H1 (cell line): ENCODE measurements at regions of chr4 and their contacts with region 1.

Region 1: GRCh38 chr4:135418353-135418752 is 1216.8 kb upstream of the PABPC4L start:
- DNase-seq: no peak
- H3K4me3 ChIP-seq: no peak overlapping the region
- H3K27ac ChIP-seq: no peak overlapping the region
- H3K4me1 ChIP-seq: no peaks in the 10 kb centered on the region
- H3K27me3 ChIP-seq: no peaks in the 10 kb centered on the region
- CTCF ChIP-seq: peak in 2 of 3 experiments; percentile 44 to 70; a peak in 2 of 4 replicates
- EP300 ChIP-seq: no peak
- POLR2A ChIP-seq: no peak
- RAD21 ChIP-seq: peak; percentile 67 to 72

Region 2: DNA sequence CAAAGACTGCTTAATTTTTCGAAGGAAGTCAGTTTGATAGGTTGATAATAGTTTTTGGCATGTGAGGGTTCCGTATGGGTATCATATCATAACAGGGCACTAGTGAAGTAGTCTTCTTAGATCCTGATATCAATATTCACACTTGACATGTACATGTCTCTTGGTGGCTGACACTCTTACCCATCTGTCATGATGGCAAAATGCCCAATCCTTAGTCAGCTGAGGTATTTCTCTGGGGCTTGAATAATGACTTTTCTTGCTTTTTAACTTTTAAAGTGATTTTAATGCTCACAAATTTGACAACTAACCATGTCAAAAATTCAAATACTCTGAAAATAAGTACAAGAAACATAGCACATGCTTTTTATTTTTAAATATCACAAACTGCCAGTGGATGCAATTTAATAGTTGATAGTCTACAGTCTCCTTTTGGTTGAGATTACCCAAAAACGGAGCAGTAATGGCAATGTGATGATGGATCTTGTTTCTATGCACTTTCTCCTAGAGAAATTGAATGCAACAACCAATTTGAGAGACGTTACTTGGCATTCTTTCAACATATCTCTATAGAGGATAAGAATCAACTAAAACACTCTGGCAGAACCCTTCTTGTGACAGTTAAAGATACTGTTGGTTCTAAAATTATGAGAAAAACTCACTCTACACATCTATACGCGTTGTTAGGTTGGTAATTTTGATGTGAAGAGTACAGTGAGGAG is 663.9 kb before region 1 on chr4:
- CTCF ChIA-PET with region 1: no interaction called
- POLR2A ChIA-PET with region 1: no interaction called
- DNase-seq: no peak
- H3K4me3 ChIP-seq: no peak overlapping the region
- H3K27ac ChIP-seq: no peak overlapping the region
- H3K4me1 ChIP-seq: no peaks in the 10 kb centered on the region
- H3K27me3 ChIP-seq: no peaks in the 10 kb centered on the region
- CTCF ChIP-seq: no peak
- EP300 ChIP-seq: no peak
- POLR2A ChIP-seq: no peak
- RAD21 ChIP-seq: no peak

Region 3: DNA sequence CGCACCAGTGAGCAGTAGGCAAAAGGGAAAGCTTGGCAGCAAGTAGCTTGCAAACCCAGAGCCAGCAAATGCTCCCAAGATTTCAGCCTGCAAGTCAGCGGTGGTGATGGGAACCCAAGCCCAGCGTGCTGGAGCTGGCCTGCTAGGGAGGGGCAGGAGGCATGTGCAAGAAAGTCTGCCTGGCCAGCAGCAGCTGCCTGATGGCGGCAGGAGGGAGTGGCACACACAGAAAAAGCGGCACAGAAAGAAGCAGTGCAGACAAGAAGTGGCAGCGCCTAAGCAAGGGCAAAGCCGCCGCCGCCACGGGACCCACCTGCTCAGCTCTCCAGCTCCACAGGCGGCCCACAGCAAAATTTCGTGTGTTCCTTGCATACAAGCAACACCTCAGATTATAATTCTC is 10.2 kb before region 1 on chr4:
- CTCF ChIA-PET with region 1: interaction called, 14 read pairs
- POLR2A ChIA-PET with region 1: no interaction called
- DNase-seq: no peak
- H3K4me3 ChIP-seq: no peak overlapping the region
- H3K27ac ChIP-seq: no peak overlapping the region
- H3K4me1 ChIP-seq: no peaks in the 10 kb centered on the region
- H3K27me3 ChIP-seq: peaks cover 0 to 1% (median 0%) of the 10 kb centered on the region in 4 experiments; a peak in 1 of 7 replicates
- CTCF ChIP-seq: no peak
- EP300 ChIP-seq: no peak
- POLR2A ChIP-seq: no peak
- RAD21 ChIP-seq: no peak

Region 4: GRCh38 chr4:135492439-135492838 is 74.1 kb after region 1 on chr4:
- CTCF ChIA-PET with region 1: no interaction called
- POLR2A ChIA-PET with region 1: no interaction called
- DNase-seq: no peak
- H3K4me3 ChIP-seq: no peak overlapping the region
- H3K27ac ChIP-seq: no peak overlapping the region
- H3K4me1 ChIP-seq: no peaks in the 10 kb centered on the region
- H3K27me3 ChIP-seq: no peaks in the 10 kb centered on the region
- CTCF ChIP-seq: no peak
- EP300 ChIP-seq: no peak
- POLR2A ChIP-seq: no peak
- RAD21 ChIP-seq: peak in 1 of 2 experiments; percentile 17; a peak in 1 of 4 replicates

Region 5: DNA sequence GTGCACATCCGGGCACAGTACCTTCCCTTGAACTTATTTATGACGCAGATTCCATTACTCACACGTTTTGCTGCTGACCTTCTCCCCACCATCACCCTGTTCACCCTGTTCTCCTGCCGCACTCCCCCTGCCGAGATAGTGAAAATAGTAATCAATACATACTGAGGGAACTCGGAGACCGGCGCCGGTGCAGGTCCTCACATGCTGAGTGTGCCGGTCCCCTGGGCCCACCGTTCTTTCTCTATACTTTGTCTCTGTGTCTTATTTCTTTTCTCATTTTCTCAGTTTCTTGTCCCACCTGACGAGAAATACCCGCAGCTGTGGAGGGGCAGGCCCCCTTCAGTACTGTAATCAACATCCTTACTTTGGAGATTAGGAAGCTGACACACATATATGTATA is 120.3 kb after region 1 on chr4:
- CTCF ChIA-PET with region 1: no interaction called
- POLR2A ChIA-PET with region 1: no interaction called
- DNase-seq: no peak
- H3K4me3 ChIP-seq: no peak overlapping the region
- H3K27ac ChIP-seq: no peak overlapping the region
- H3K4me1 ChIP-seq: no peaks in the 10 kb centered on the region
- H3K27me3 ChIP-seq: no peaks in the 10 kb centered on the region
- CTCF ChIP-seq: no peak
- EP300 ChIP-seq: no peak
- POLR2A ChIP-seq: no peak
- RAD21 ChIP-seq: no peak

Region 6: DNA sequence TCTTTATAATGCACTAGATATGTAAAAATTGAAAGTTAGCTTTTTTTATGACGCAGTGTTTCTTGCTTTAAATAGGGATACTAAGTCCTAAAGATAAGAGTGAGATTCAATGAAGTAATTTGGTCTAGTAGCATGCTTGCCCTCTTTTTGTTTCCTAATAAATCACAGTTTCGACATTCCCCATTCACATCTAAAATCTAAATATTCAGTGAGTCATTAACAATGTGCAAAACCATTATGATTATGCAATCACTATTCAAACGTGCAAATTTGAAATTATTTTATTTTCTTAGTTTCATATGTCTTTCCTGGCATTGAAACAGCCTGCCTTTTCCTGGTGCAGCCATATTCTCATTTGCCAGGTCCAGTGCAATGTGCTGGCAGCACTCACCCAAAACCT is 133.8 kb after region 1 on chr4:
- CTCF ChIA-PET with region 1: no interaction called
- POLR2A ChIA-PET with region 1: no interaction called
- DNase-seq: no peak
- H3K4me3 ChIP-seq: no peak overlapping the region
- H3K27ac ChIP-seq: no peak overlapping the region
- H3K4me1 ChIP-seq: no peaks in the 10 kb centered on the region
- H3K27me3 ChIP-seq: no peaks in the 10 kb centered on the region
- CTCF ChIP-seq: no peak
- EP300 ChIP-seq: no peak
- POLR2A ChIP-seq: no peak
- RAD21 ChIP-seq: no peak